Posterior cingulate gyrus (tissue), 11 donors: ENCODE measurements at regions of chr1 and their contacts with region 1.

Region 1: DNA sequence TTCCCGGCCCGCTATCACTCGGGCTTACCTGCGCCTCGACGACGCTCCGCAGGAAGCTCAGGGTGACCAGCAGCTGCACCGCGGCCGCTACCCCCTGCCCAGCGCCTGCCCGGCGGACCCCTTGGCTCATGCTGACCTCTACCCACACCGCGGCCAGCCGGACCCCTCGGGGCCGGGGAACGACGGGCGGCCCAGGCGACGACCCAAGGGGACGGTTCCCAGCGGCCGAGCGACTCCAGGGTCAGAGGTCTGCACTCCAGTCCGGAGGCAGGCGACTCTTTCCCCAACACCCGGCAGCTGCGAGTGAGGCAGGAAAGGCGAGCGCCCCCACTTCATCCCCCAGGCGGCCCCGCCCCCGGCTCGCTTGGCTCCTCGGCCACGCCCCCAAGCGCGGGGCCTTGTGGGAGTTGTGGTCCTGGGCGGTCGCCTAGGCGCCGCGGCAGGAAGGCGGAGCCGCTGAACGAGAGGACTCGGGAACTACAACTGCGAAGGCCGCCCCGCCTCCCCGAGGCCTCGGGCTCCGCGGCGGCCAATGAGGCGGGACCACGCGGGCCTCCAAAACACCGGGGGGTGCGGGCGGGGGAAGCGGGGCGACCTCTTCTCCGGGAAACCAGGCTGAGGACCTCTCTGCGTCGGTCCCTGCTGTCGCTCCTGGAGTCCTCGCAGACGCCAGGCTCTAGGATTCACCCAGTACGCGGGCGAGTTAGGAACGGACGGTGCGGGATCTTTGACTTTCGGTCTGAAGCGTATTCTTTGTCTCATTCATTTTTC is at the start of gene ERO1B:
- DNase-seq: peak; percentile 95 to 100 (median 98)

Region 2: DNA sequence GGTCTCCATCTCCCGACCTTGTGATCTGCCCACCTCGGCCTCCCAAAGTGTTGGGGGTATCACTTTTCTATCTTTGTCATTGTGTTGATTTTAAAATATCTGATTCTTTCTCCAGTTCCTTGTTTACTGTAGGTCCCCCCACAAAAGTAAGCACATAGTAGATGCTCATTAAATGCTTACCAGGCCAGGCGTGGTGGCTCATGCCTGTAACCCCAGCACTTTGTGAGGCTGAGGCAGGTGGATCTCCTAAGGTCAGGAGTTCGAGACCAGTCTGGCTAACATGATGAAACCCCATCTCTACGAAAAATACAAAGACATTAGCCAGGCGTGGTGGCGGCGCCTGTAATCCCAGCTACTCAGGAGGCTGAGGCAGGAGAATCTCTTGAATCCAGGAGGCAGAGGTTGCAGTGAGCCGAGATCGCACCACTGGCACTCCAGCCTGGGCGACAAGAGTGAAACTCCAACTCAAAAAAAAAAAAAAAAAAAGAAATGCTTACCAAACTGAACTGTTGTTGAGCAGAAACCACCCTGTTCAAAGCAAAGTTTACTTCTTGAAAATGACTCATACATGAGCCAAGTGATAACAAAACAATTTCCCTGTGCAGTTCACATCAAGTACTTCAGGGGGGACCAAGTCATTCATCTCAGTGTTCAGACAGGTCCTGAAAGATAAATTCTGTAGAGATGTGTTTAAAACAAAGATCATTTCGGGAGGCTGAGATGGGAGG is 192.6 kb before region 1 on chr1:
- intact Hi-C with region 1: no loop called
- DNase-seq: peak in 1 of 10 donors; percentile 15

Region 3: GRCh38 chr1:236124956-236125355 is 156.9 kb before region 1 on chr1:
- intact Hi-C with region 1: no loop called
- DNase-seq: no peak

Region 4: GRCh38 chr1:236142253-236143103 is 139.4 kb before region 1 on chr1 and contains the start of gene GPR137B:
- intact Hi-C with region 1: loop called (anchors 2 kb)
- DNase-seq: peak; percentile 56 to 94 (median 68)

Region 5: GRCh38 chr1:236795035-236795756 is 513.4 kb after region 1 on chr1 and contains the start of gene MTR:
- intact Hi-C with region 1: loop called (anchors 10 kb)
- DNase-seq: peak; percentile 95 to 100 (median 98)